Activated CD8-positive, alpha-beta T cell treated with anti-CD3 and anti-CD28 coated beads, Interleukin-2, amount 10 ng/mL, durations not matched to agents 7 days and 5 days (primary cell): ENCODE measurements at regions of chr6 and their contacts with region 1.

Region 1: GRCh38 chr6:106163446-106163965 is 77.4 kb downstream of the PRDM1 start:
- DNase-seq: peak; percentile 71
- ATAC-seq: peak; percentile 84
- H3K4me3 Mint-ChIP-seq: peak overlapping the region; percentile 34
- H3K27ac Mint-ChIP-seq: peak overlapping the region; percentile 93
- H3K4me1 Mint-ChIP-seq: peaks cover 65% of the 10 kb centered on the region
- H3K27me3 Mint-ChIP-seq: no peaks in the 10 kb centered on the region

Region 2: DNA sequence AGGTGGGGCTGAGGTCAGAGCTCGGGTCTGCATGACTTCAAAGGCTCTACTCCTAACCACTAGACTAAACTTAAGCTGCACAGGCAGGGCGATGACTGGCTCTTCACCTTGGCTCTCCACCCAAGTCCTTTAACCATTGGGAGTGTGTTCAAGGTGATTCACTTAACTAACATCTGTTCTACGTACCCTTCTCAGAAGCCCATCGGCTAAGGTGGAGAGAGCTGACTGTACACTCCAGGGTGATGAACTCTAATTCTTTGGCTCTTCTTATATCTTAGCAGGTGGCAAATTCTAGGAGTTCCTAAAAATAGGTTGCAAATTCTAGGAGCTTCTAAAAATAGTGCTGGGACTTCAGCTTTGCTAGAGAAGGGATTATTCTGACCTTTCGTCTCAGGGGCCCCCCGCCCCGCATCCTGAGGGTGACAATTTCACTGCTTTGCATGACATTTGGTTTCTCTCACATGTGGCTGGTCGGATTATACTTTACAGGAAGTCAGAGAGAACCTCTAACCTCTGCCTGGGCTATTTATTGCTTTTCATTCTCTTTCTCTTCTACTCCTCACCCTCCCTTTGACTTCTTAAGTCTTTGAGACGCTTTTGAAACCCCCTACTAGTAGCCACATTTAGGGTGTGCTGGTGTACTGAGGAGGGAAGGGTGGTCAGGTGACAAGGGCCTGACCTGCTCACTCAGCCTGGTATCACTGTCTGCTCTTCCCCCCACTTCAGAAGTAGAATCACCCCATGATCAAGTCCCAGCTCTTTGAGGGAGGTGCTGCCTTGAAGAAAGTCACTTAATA is 21.9 kb before region 1 on chr6:
- CTCF ChIA-PET with region 1: interaction called, 27 read pairs
- POLR2A ChIA-PET with region 1: interaction called, 37 read pairs
- DNase-seq: peak; percentile 85
- ATAC-seq: peak; percentile 87
- H3K4me3 Mint-ChIP-seq: peak overlapping the region; percentile 67
- H3K27ac Mint-ChIP-seq: peak overlapping the region; percentile 97
- H3K4me1 Mint-ChIP-seq: peaks cover 73% of the 10 kb centered on the region
- H3K27me3 Mint-ChIP-seq: no peaks in the 10 kb centered on the region

Region 3: GRCh38 chr6:106181664-106182418 is 18.3 kb after region 1 on chr6:
- CTCF ChIA-PET with region 1: interaction called, 18 read pairs
- POLR2A ChIA-PET with region 1: interaction called, 7 read pairs
- DNase-seq: no peak
- ATAC-seq: no peak
- H3K4me3 Mint-ChIP-seq: no peak overlapping the region
- H3K27ac Mint-ChIP-seq: no peak overlapping the region
- H3K4me1 Mint-ChIP-seq: peaks cover 48% of the 10 kb centered on the region
- H3K27me3 Mint-ChIP-seq: no peaks in the 10 kb centered on the region

Region 4: GRCh38 chr6:106244931-106245330 is 81.4 kb after region 1 on chr6:
- CTCF ChIA-PET with region 1: no interaction called
- POLR2A ChIA-PET with region 1: no interaction called
- DNase-seq: no peak
- ATAC-seq: no peak
- H3K4me3 Mint-ChIP-seq: no peak overlapping the region
- H3K27ac Mint-ChIP-seq: no peak overlapping the region
- H3K4me1 Mint-ChIP-seq: peaks cover 6% of the 10 kb centered on the region
- H3K27me3 Mint-ChIP-seq: no peaks in the 10 kb centered on the region